Activated CD4-positive, alpha-beta T cell treated with anti-CD3 and anti-CD28 coated beads, Interleukin-2, amount 10 ng/mL, durations not matched to agents 24 days and 14 days (primary cell): ENCODE measurements at regions of chr3 and their contacts with region 1.

Region 1: GRCh38 chr3:188076176-188076575 is 77.8 kb upstream of the LPP start:
- DNase-seq: no peak
- H3K4me3 Mint-ChIP-seq: no peak overlapping the region
- H3K27ac Mint-ChIP-seq: no peak overlapping the region
- H3K4me1 Mint-ChIP-seq: peaks cover 4% of the 10 kb centered on the region
- H3K27me3 Mint-ChIP-seq: no peaks in the 10 kb centered on the region

Region 2: GRCh38 chr3:188097791-188098190 is 21.6 kb after region 1 on chr3:
- intact Hi-C with region 1: loop called (anchors 2 kb)
- DNase-seq: no peak
- H3K4me3 Mint-ChIP-seq: no peak overlapping the region
- H3K27ac Mint-ChIP-seq: no peak overlapping the region
- H3K4me1 Mint-ChIP-seq: peaks cover 2% of the 10 kb centered on the region
- H3K27me3 Mint-ChIP-seq: no peaks in the 10 kb centered on the region